ENCODE measurements at regions of chr14 and their contacts with region 1.

Region 1: GRCh38 chr14:55707365-55707804 is 127.4 kb downstream of the KTN1 start:
- DNase-seq: no peak

Region 2: DNA sequence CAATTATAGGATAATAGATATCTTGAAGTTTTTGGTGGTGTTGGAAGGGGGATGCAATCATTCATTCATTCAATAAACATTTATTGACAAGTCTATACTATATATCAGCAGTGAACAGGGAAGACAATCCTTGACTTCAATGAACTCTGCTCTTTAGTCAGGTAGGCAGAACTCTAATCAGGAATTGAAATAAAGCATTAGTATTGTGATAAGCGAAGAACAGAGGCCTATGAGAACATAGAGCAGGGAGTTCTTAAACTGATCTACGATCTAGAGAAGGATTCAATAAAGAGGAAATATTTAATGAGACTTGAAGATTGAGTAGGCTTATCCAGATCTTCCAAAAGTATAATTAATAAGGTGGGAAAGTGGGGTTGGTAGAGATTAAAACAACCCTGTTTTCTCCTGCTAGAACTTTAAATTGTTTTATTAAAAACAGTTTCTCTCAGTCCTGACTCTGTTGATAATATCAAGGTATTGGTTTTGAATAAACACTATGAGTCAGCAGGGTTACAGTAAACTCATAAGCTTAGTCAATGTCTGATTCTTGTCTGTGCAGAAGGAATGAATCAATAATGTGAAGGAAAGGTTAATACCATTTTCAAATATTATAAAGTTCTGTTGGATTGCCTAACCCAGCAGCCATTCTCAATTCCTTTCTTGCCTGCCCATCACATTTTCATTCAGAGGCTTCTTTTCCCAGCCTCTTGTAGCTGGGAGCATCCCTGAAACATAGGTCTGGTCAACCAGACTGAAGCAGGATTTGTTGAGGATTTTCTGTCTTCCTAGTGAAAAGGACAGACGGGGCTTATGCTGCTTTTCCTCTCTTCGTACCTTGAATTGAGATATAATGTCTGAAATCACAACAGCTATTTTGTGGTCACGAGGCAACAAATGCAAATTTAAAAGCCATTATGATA is 166.3 kb before region 1 on chr14:
- intact Hi-C with region 1: no loop called
- DNase-seq: no peak

Region 3: DNA sequence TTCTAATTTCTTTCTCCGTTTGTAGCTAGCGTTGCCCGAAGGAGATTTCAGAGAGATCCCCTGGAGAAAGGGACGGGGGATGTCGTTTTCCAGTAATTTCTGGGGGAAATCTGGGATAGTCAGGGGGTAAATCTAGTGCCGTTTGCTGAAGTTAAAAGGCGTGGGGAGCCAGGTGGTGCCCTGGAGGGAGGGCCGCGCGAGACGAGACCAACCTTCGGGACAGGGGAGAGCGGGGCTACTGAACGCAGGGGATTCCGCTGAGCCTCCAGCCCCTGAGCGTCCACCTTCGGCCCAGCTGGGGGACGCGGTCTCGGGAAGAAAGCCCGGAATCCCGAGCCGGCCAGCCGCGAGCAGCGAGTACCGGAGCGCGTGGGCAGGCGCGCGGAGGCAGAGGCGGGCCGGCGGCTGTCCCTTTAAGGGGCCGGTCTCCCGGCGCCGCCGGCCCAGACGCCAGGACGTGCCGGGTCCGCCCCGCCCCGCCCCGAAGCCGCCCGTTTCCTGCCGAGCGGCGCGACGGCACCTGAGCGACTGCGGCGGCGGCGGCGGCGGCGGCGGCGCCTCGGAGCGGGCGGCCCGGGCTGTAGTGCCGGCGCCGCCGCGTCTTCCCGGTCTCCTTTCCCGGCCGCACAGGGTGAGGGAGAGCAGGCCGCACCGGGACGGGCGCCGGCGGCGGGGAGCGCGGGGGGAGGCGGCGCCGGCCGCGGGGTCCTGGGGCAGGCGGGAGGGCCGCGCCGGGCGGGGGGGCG is 127.5 kb before region 1 on chr14 and contains the start of gene KTN1:
- intact Hi-C with region 1: no loop called
- DNase-seq: peak; percentile 58 to 97 (median 79)

Region 4: DNA sequence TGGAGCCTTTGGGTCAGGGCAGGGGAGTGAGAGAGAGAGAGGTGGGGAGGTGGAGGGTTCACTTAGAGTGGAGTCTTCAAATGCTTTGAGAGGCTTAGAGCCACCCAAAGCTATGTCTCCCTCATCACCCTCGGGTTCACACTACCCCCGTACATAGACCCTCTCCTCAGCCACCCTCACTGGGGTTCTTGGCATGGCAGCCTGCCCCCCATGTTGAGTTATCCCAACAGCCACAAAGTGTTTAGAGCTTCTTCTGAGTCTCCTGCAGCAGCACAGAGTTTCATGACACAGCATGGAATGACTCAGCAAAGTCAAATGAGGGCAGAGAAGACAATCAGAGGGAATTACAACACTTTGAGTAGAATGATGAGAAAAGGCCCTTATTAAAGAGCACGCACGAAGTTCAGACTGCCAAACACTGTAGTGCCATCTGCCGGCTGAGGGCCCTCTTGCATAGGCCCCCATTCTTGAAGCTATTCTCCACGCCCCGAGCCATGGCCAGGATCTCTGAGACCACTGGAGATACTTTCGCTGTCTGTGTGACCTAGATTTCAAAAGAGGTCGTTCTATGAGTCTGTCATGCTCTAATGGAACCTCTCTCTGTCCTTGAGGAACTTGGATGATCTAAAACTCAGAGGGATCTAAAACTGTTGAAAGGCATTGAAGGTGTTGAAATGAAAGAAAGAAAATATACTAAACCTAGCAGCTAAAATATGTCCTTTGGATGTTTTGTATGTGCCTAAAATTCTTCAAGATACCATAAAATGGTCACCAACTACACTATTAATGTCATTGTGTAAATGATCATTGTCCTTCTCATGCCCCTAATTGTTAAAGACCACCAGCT is 632.7 kb after region 1 on chr14:
- intact Hi-C with region 1: loop called (anchors 1 kb)
- DNase-seq: peak; percentile 35 to 95 (median 74)

Region 5: DNA sequence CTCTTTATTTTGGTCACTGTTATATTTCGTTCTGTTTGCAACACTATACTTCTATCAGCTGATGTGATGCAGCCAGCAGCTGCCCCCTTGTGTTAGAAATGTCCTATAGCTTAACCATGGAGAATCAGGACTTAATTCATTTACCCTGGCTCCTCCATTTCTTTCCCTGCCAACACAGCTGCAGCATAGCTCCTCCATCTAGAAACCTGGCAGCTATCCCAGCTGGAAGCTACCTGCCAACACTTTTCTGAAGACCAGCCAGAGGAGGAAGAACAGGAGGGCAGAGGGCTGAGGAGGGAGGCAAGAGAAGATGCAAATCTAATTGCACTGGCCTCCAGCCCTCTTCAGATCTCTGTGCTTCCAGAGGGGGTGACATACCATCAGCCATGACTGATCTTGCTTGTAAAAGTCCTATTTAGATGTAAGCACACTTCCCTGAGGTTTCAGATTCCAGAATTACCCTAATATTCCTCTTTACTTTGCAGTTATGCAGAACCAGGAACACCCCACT is 715.4 kb after region 1 on chr14:
- intact Hi-C with region 1: loop called (anchors 5 kb)
- DNase-seq: peak in 9 of 10 donors; percentile 14 to 83 (median 32)

Region 6: GRCh38 chr14:56474419-56475022 is 767.1 kb after region 1 on chr14:
- intact Hi-C with region 1: loop called (anchors 1 kb)
- DNase-seq: no peak